ENCODE measurements at regions of chr1 and their contacts with region 1.

Region 1: GRCh38 chr1:110495926-110496600 is 22.9 kb downstream of the KCNA10 start:
- DNase-seq: peak; percentile 92
- ATAC-seq: peak; percentile 88
- H3K4me3 Mint-ChIP-seq: no peak overlapping the region
- H3K27ac Mint-ChIP-seq: no peak overlapping the region
- H3K4me1 Mint-ChIP-seq: no peaks in the 10 kb centered on the region
- H3K27me3 Mint-ChIP-seq: no peaks in the 10 kb centered on the region
- CTCF ChIP-seq: peak; percentile 89

Region 2: DNA sequence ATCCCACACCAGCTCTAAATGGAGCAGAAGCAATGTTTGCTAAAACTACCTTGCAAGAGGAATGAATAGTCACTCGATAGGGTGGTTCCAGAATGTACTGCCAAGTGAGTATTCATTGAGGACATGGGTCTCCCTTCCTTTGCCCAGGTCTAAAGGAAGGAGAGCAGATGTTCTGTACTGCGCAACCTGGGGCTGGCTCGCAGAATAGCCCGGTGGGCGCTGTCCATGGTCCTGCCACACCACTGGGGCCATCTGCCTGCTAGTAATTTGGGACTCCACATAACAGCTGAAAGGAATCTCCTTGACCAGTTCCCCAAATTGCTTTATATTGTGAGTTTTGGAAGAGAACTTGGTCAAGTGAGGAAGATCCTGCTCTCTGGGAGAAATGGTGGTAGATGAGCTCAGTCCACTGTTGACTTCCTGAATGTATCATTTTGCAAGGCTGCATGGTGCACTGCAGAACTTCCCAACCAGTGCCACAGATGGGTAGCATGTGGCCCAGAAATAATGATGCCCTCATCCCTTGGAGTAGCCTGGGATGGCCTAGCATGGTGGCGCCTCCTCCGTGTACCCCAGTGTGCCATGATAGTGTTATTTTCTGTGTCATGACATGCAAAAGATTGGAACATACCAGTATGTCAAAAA is 340.1 kb before region 1 on chr1:
- CTCF ChIA-PET with region 1: no interaction called
- POLR2A ChIA-PET with region 1: no interaction called
- intact Hi-C with region 1: no loop called
- DNase-seq: peak; percentile 70
- ATAC-seq: peak; percentile 66
- H3K4me3 Mint-ChIP-seq: no peak overlapping the region
- H3K27ac Mint-ChIP-seq: no peak overlapping the region
- H3K4me1 Mint-ChIP-seq: peaks cover 5% of the 10 kb centered on the region
- H3K27me3 Mint-ChIP-seq: peaks cover 50% of the 10 kb centered on the region
- CTCF ChIP-seq: no peak

Region 3: GRCh38 chr1:110203021-110203661 is 292.9 kb before region 1 on chr1:
- CTCF ChIA-PET with region 1: interaction called, 69 read pairs
- POLR2A ChIA-PET with region 1: interaction called, 3 read pairs
- intact Hi-C with region 1: loop called (anchors 10 kb)
- DNase-seq: peak; percentile 84
- ATAC-seq: peak; percentile 75
- H3K4me3 Mint-ChIP-seq: no peak overlapping the region
- H3K27ac Mint-ChIP-seq: peak overlapping the region; percentile 91
- H3K4me1 Mint-ChIP-seq: peaks cover 21% of the 10 kb centered on the region
- H3K27me3 Mint-ChIP-seq: no peaks in the 10 kb centered on the region
- CTCF ChIP-seq: peak; percentile 78

Region 4: GRCh38 chr1:110262846-110263631 is 233.0 kb before region 1 on chr1:
- CTCF ChIA-PET with region 1: no interaction called
- POLR2A ChIA-PET with region 1: no interaction called
- intact Hi-C with region 1: no loop called
- DNase-seq: peak; percentile 43
- ATAC-seq: peak; percentile 83
- H3K4me3 Mint-ChIP-seq: no peak overlapping the region
- H3K27ac Mint-ChIP-seq: no peak overlapping the region
- H3K4me1 Mint-ChIP-seq: no peaks in the 10 kb centered on the region
- H3K27me3 Mint-ChIP-seq: no peaks in the 10 kb centered on the region
- CTCF ChIP-seq: no peak

Region 5: DNA sequence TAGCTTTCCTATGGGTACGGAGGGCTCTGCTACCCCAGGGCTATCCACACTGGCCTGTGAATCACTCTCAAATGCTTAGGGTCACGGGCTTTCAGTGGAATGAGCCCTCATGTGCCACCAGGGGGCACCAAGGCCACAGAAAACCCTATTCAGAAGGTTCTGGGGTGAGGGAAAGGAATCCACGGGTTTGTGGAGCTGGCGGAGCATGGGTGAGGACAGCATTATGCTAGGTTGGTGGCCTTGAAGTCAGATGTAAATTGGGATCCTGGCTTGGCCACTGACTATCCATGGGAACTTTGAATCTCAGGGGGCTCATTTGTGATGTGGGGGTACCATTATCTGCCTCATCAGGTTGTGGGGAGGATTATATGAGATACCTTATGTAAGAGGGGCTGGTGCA is 83.5 kb before region 1 on chr1:
- CTCF ChIA-PET with region 1: interaction called, 101 read pairs
- POLR2A ChIA-PET with region 1: no interaction called
- intact Hi-C with region 1: no loop called
- DNase-seq: peak; percentile 75
- ATAC-seq: peak; percentile 52
- H3K4me3 Mint-ChIP-seq: no peak overlapping the region
- H3K27ac Mint-ChIP-seq: no peak overlapping the region
- H3K4me1 Mint-ChIP-seq: peaks cover 10% of the 10 kb centered on the region
- H3K27me3 Mint-ChIP-seq: no peaks in the 10 kb centered on the region
- CTCF ChIP-seq: peak; percentile 72

Region 6: DNA sequence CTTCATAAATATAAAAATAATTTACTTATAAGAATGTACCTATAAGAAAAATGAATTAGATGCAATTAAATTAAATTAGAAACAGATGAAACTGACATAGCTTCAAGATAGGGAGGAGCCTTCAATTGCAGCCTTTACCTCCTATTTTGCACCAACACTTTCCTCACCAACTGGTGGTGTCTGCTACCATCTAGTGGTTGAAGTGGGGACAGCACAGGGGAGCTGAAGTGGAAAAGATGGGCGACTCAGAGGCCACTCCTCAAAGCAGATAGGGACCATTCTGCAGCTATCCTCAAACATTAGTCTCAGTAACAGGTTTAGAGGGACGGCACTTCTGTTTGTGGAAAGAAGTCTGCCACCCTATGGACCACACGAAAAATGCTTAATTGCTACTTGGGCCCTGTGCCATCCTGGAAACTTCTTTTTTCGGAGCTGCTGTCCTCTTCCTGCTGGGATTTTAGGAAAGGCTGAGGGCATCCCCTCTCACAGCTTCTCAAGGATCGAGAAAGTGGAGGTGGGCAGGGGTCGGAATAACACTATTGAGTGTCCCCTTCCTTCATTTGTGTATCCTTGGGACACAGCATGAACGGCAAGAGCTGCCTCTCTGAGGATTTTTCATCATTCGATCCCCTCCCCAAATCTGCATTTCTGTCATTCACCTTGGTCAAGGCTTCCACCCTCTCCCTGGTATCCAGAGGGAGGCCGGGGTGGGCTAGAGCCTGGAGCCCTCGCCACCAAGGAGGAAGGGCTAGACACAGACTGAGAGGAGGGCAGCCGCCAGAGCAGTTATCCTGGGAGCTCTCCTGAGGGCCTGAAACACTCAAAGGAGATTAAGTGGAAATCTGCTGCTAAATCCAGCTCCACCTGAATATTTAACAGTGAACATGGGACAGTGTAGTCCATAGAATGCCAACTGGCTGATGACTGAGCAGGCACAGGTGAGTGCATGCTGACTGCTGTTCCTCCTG is 35.5 kb before region 1 on chr1:
- CTCF ChIA-PET with region 1: interaction called, 100 read pairs
- POLR2A ChIA-PET with region 1: no interaction called
- intact Hi-C with region 1: no loop called
- DNase-seq: peak; percentile 90
- ATAC-seq: peak; percentile 100
- H3K4me3 Mint-ChIP-seq: no peak overlapping the region
- H3K27ac Mint-ChIP-seq: no peak overlapping the region
- H3K4me1 Mint-ChIP-seq: no peaks in the 10 kb centered on the region
- H3K27me3 Mint-ChIP-seq: no peaks in the 10 kb centered on the region
- CTCF ChIP-seq: peak; percentile 89

Region 7: DNA sequence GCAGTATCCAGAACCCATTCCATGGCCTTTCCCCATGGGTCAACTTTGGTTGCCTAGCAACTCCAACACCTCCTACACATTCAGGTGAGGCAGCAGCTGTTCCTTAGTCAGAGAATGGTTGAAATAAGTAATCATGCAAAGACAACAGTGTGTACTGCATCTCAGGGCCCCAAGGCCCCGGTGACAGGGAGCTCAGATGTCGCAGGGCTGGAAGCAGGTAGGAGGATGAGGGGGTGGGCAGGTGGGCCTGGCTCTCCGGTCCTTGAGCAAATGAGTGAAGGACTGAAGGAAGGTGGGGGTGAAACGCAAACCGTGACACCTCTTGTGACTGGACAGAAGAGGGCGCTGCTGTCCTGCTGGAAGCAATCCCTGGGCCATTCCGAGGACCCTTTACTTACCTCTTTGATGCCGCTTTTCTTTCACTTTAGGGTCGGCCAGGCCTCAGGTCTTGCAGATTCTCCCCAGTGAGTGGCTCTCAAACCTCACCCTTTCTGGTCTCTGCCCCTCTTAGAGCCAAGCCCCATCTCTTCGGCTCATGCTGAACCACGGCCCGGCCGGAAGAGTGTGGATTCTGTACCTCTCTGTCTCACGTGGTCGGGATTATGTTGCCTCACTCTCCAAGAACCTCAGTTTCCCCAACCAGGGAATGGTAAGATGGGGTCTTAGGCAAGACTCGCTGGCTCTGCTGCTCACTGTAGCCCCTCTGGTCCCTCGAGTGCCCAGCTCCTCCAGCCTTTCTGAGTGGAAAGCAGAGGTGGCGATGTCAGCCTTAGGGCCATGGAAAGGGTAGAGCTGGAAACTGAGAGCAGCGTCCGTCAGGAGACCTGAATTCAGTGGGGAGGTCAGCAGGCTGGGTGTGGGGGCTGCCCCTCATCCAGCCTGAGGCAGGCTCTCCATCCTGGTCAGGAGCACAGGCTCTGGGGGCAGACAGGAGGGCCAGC is 28.5 kb after region 1 on chr1:
- CTCF ChIA-PET with region 1: interaction called, 23 read pairs
- POLR2A ChIA-PET with region 1: no interaction called
- intact Hi-C with region 1: no loop called
- DNase-seq: peak; percentile 69
- ATAC-seq: peak; percentile 92
- H3K4me3 Mint-ChIP-seq: no peak overlapping the region
- H3K27ac Mint-ChIP-seq: no peak overlapping the region
- H3K4me1 Mint-ChIP-seq: no peaks in the 10 kb centered on the region
- H3K27me3 Mint-ChIP-seq: peaks cover 10% of the 10 kb centered on the region
- CTCF ChIP-seq: peak; percentile 89

Region 8: DNA sequence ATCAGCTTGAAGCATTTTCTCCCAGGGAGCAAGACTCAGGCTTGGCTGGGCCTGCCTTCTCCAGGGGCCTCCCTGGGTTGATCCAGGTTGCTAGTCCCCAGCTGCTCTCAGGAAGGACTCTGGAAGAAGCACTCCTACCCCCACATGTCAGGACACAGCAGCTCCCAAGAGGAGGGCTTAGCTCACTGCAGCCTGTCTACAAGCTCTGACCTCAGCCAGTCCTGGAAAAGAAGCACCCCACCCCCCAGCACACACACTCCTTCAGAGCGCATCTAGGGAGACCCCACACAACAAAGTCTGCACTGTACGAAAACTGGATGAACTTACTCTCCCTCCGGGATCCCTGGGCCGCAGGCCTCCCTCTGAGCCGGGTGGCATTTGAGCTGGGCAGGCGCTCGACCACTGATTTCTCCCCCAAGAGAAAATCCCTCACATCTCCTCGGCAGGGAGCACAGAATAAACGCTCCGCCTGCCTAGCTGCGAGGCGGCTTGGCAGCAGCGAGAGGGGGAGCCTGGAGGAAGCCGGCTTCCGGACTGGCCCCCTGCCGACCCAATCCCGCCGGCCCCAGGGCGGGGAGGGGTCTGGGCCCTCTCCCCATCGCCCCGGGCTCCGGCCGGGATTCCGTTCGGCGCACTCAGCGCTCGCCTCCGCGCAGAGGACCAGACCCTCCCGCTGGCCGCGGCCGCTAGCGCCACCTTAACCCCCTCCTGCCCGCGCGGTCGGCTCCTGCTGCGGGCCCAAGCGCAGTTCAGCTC is 110.0 kb after region 1 on chr1 and contains the start of gene KCNA2:
- CTCF ChIA-PET with region 1: interaction called, 13 read pairs
- POLR2A ChIA-PET with region 1: no interaction called
- intact Hi-C with region 1: no loop called
- DNase-seq: no peak
- ATAC-seq: peak; percentile 40
- H3K4me3 Mint-ChIP-seq: peak within 1 kb of the TSS; percentile 68
- H3K27ac Mint-ChIP-seq: no peak within 1 kb of the TSS
- H3K4me1 Mint-ChIP-seq: peaks cover 5% of the 10 kb centered on the region
- H3K27me3 Mint-ChIP-seq: peaks cover 44% of the 10 kb centered on the region
- CTCF ChIP-seq: no peak
- total RNA-seq, gene KCNA2: 0.02 to 0.14 TPM

Region 9: GRCh38 chr1:110829955-110830553 is 334.0 kb after region 1 on chr1:
- CTCF ChIA-PET with region 1: no interaction called
- POLR2A ChIA-PET with region 1: no interaction called
- intact Hi-C with region 1: no loop called
- DNase-seq: peak; percentile 22
- ATAC-seq: peak; percentile 97
- H3K4me3 Mint-ChIP-seq: no peak overlapping the region
- H3K27ac Mint-ChIP-seq: no peak overlapping the region
- H3K4me1 Mint-ChIP-seq: peaks cover 9% of the 10 kb centered on the region
- H3K27me3 Mint-ChIP-seq: no peaks in the 10 kb centered on the region
- CTCF ChIP-seq: peak; percentile 92

Measured in activated CD8-positive, alpha-beta T cell treated with anti-CD3 and anti-CD28 coated beads for 36 hours (primary cell).